Panc1 (cell line): ENCODE measurements at regions of chr15 and their contacts with region 1.

Region 1: GRCh38 chr15:34065941-34066340 is 26.9 kb upstream of the AVEN start:
- DNase-seq: no peak
- ATAC-seq: no peak
- H3K4me3 ChIP-seq: no peak overlapping the region
- H3K27ac ChIP-seq: no peak overlapping the region
- H3K4me1 ChIP-seq: no peaks in the 10 kb centered on the region
- H3K27me3 ChIP-seq: no peaks in the 10 kb centered on the region
- CTCF ChIP-seq: no peak

Region 2: GRCh38 chr15:33808720-33809457 is 257.1 kb before region 1 on chr15:
- CTCF ChIA-PET with region 1: no interaction called
- POLR2A ChIA-PET with region 1: no interaction called
- in situ Hi-C with region 1: no loop called
- intact Hi-C with region 1: no loop called
- DNase-seq: no peak
- ATAC-seq: no peak
- H3K4me3 ChIP-seq: no peak overlapping the region
- H3K27ac ChIP-seq: no peak overlapping the region
- H3K4me1 ChIP-seq: no peaks in the 10 kb centered on the region
- H3K27me3 ChIP-seq: no peaks in the 10 kb centered on the region; the same call in 1 of the 2 replicates
- CTCF ChIP-seq: no peak

Region 3: GRCh38 chr15:34154725-34155204 is 88.8 kb after region 1 on chr15:
- CTCF ChIA-PET with region 1: no interaction called
- POLR2A ChIA-PET with region 1: no interaction called
- in situ Hi-C with region 1: no loop called
- intact Hi-C with region 1: no loop called
- DNase-seq: no peak
- ATAC-seq: no peak
- H3K4me3 ChIP-seq: no peak overlapping the region
- H3K27ac ChIP-seq: no peak overlapping the region
- H3K4me1 ChIP-seq: no peaks in the 10 kb centered on the region
- H3K27me3 ChIP-seq: no peaks in the 10 kb centered on the region
- CTCF ChIP-seq: no peak

Region 4: DNA sequence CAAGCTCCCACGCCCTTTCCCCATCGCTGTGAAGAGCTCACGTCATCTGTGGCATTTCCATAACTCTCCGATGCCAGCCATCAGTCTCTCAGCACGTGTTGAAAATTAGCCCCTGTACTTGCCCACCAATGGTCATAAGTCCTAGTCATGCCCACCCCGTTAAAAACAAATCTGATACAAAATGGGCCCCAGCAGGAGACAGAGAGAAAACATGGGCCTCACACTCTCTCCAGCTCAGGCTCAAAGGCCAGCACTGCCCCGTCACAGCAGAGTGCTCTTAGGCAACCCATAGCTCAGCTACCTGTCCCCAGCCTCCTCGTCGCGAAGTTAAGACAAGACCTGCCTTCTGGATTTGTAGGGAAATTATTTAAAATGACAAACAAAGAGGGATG is 512.3 kb after region 1 on chr15:
- CTCF ChIA-PET with region 1: no interaction called
- POLR2A ChIA-PET with region 1: no interaction called
- in situ Hi-C with region 1: no loop called
- intact Hi-C with region 1: loop called (anchors 10 kb)
- DNase-seq: no peak
- ATAC-seq: no peak
- H3K4me3 ChIP-seq: no peak overlapping the region
- H3K27ac ChIP-seq: no peak overlapping the region
- H3K4me1 ChIP-seq: peaks cover 17% of the 10 kb centered on the region
- H3K27me3 ChIP-seq: no peaks in the 10 kb centered on the region
- CTCF ChIP-seq: no peak